ENCODE measurements at regions of chr7 and their contacts with region 1.

Region 1: GRCh38 chr7:119175911-119176627 is 951.6 kb downstream of the ANKRD7 start:
- DNase-seq: peak; percentile 65 to 82
- H3K4me3 ChIP-seq: no peak overlapping the region
- H3K27ac ChIP-seq: no peak overlapping the region
- H3K4me1 ChIP-seq: peaks cover 0 to 5% (median 2%) of the 10 kb centered on the region in 4 experiments; a peak in 5 of 7 replicates
- H3K27me3 ChIP-seq: no peaks in the 10 kb centered on the region
- CTCF ChIP-seq: peak in 2 of 3 experiments; percentile 68 to 79; a peak in 3 of 4 replicates
- EP300 ChIP-seq: no peak
- POLR2A ChIP-seq: no peak
- RAD21 ChIP-seq: peak; percentile 90 to 92

Region 2: GRCh38 chr7:118870187-118870586 is 305.9 kb before region 1 on chr7:
- CTCF ChIA-PET with region 1: interaction called, 25 read pairs
- POLR2A ChIA-PET with region 1: no interaction called
- DNase-seq: peak in 1 of 2 experiments; percentile 47
- H3K4me3 ChIP-seq: no peak overlapping the region
- H3K27ac ChIP-seq: no peak overlapping the region
- H3K4me1 ChIP-seq: peaks cover 0 to 3% (median 0%) of the 10 kb centered on the region in 4 experiments; a peak in 1 of 7 replicates
- H3K27me3 ChIP-seq: no peaks in the 10 kb centered on the region
- CTCF ChIP-seq: peak in 2 of 3 experiments; percentile 58; a peak in 3 of 4 replicates
- EP300 ChIP-seq: no peak
- POLR2A ChIP-seq: no peak
- RAD21 ChIP-seq: peak; percentile 74 to 81

Region 3: DNA sequence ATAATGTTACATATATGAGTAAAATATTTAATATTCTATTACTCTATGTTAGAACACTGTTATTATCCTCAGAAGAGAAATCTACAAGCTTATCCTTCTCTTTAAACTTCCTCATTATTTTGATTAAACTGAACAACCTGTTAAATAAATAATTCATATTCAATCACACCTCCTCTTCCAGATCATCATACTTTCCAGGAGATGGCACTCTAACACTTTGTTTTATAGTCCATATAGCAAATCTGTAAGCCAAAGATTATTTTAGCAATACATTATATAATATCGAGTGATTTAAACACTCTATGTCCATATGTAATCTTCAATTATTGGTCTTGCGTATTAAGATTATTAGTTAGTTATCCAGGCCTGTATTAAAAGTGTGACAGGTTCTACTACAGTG is 257.5 kb before region 1 on chr7:
- CTCF ChIA-PET with region 1: interaction called, 21 read pairs
- POLR2A ChIA-PET with region 1: no interaction called
- DNase-seq: no peak
- H3K4me3 ChIP-seq: no peak overlapping the region
- H3K27ac ChIP-seq: no peak overlapping the region
- H3K4me1 ChIP-seq: no peaks in the 10 kb centered on the region
- H3K27me3 ChIP-seq: no peaks in the 10 kb centered on the region
- CTCF ChIP-seq: peak in 1 of 3 experiments; percentile 20; a peak in 1 of 4 replicates
- EP300 ChIP-seq: no peak
- POLR2A ChIP-seq: no peak
- RAD21 ChIP-seq: peak in 1 of 2 experiments; percentile 67; a peak in 3 of 4 replicates

Region 4: DNA sequence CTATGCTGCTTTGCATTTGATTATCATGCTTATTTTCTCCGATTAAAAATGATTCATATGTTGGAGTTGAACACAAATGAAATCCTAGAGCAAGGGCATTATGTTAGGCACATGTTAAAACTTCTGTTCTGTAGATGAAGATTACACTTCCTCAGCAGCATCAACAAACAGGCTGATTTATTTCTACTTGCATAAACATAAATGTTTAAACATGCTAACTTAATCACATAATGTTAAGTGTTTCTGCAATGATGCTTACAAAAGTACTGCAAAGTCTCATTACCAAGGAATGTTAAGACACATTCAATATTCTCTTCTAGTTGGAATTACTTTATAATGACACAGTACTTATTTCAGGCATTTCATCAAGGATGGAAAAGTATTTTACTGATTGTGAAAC is 180.7 kb before region 1 on chr7:
- CTCF ChIA-PET with region 1: no interaction called
- POLR2A ChIA-PET with region 1: no interaction called
- DNase-seq: no peak
- H3K4me3 ChIP-seq: no peak overlapping the region
- H3K27ac ChIP-seq: no peak overlapping the region
- H3K4me1 ChIP-seq: no peaks in the 10 kb centered on the region
- H3K27me3 ChIP-seq: no peaks in the 10 kb centered on the region
- CTCF ChIP-seq: no peak
- EP300 ChIP-seq: no peak
- POLR2A ChIP-seq: no peak
- RAD21 ChIP-seq: no peak